ENCODE measurements at regions of chr1 and their contacts with region 1.

Region 1: DNA sequence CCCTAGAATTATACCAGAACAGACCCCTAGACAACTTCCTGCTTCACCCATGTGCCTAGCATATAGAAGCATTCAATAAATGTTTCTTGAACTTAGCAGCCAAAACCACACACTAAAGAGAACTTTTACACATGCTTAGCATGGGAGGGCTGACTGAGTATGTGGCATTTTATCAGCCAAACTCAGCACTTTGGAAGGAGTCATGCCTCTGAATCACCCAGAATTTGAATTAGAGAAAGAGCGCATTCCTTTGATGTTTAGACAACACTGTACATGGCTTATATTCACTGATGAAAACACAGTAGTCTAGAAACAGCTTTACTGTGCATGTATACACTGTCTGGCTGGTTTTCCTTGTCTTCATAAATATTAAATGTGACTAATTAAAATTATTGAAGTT is 26.1 kb downstream of the SPAG17 start:
- DNase-seq: peak; percentile 31
- H3K4me3 Mint-ChIP-seq: no peak overlapping the region
- H3K27ac Mint-ChIP-seq: peak overlapping the region; percentile 3
- H3K4me1 Mint-ChIP-seq: peaks cover 18% of the 10 kb centered on the region
- H3K27me3 Mint-ChIP-seq: no peaks in the 10 kb centered on the region
- CTCF ChIP-seq: no peak

Region 2: DNA sequence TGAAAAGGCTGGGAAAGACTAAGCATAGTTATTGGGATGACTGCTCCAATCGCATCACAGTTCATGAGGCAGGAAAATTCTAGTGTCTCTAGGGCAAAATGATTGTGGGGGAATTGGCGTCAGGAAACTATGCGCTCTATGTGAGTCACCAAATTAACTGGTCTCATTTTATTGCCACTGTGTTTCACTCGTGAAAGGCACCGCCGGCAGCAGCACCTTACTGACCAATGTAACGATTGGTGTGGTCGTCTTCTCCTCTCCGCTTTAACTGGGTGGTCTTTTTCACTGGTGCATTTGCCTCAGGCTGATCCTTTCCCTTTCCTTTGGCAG is 57.4 kb before region 1 on chr1:
- CTCF ChIA-PET with region 1: no interaction called
- POLR2A ChIA-PET with region 1: no interaction called
- intact Hi-C with region 1: no loop called
- DNase-seq: peak; percentile 45
- H3K4me3 Mint-ChIP-seq: no peak overlapping the region
- H3K27ac Mint-ChIP-seq: no peak overlapping the region
- H3K4me1 Mint-ChIP-seq: peaks cover 15% of the 10 kb centered on the region
- H3K27me3 Mint-ChIP-seq: no peaks in the 10 kb centered on the region
- CTCF ChIP-seq: no peak

Region 3: GRCh38 chr1:118204648-118205047 is 45.7 kb after region 1 on chr1:
- CTCF ChIA-PET with region 1: interaction called, 3 read pairs
- POLR2A ChIA-PET with region 1: interaction called, 14 read pairs
- intact Hi-C with region 1: loop called (anchors 5 kb)
- DNase-seq: peak; percentile 44
- H3K4me3 Mint-ChIP-seq: no peak overlapping the region
- H3K27ac Mint-ChIP-seq: peak overlapping the region; percentile 68
- H3K4me1 Mint-ChIP-seq: peaks cover 25% of the 10 kb centered on the region
- H3K27me3 Mint-ChIP-seq: no peaks in the 10 kb centered on the region
- CTCF ChIP-seq: no peak

Region 4: DNA sequence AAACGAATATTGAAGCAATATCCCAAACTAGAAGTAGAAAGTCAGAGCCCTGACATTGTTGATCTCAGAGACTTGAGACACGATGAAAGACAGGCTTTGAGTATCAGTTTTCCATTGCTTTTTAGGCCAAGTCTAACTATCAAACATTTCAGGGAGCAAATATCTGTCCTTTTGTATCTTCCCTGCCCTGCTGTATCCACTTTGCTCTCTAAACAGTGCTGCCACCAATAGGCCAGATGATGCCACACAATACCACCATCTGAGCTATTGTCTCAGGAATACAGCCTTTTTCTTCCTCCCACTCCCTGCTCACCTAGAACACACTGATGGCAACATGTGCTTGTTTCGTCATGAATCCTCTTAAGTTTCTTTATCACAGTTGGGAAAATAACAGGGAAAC is 88.7 kb after region 1 on chr1:
- CTCF ChIA-PET with region 1: interaction called, 12 read pairs
- POLR2A ChIA-PET with region 1: no interaction called
- intact Hi-C with region 1: loop called (anchors 5 kb)
- DNase-seq: peak; percentile 57
- H3K4me3 Mint-ChIP-seq: no peak overlapping the region
- H3K27ac Mint-ChIP-seq: no peak overlapping the region
- H3K4me1 Mint-ChIP-seq: no peaks in the 10 kb centered on the region
- H3K27me3 Mint-ChIP-seq: no peaks in the 10 kb centered on the region
- CTCF ChIP-seq: peak; percentile 35

Measured in MCF 10A (cell line).